ENCODE measurements at regions of chr7 and their contacts with region 1.

Region 1: DNA sequence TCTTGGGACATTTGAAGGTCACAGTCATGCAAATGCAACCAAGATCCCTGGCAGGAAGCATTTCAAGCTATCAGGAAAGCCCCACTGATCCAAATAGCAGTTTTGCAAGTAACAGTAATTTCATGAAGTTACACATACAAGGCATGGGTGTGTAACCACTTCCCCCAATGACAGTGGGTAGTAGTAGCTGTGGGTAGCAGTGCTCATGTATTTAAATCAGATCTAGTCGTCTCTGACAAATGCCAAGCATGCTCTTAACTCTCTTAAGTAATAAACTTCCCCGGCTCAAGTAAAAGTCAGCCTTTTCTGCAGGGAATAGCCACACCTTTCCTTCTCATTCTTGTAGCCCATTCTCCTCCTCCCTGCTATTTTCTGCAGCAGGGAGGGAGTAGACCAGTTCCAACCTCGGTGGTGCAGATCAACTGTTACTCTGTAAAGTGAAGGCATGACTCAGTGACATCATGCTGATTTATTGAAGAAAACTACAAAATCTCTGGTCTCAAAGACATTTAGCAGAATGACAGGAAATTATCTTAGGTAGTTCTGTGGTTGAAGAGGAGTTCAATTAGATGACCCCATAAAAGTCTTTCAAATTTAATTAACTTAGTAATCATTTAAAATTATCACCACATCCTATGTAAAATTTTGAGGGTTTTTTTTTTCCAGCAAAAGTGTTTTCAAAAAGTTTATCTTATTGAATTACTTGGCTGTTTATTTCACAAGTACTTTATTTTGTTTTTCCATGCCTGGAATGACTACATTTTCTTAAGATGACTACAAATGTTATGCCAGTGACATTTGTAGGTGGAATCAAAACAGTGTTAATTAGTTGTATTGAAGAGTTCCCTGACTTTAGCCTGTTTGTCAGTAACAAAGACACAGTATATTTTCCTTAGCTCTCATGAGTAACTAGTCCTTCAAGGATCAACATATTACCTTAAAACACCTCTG is 568.3 kb downstream of the INHBA start:
- DNase-seq: peak; percentile 64
- ATAC-seq: peak; percentile 92
- H3K4me3 ChIP-seq: no peak overlapping the region
- H3K27ac ChIP-seq: peak overlapping the region; percentile 56; the same call in 1 of the 2 replicates
- H3K4me1 ChIP-seq: no peaks in the 10 kb centered on the region
- H3K27me3 ChIP-seq: no peaks in the 10 kb centered on the region
- CTCF ChIP-seq: no peak
- EP300 ChIP-seq: peak; percentile 49 to 63; a peak in 1 of 4 replicates
- POLR2A ChIP-seq: no peak
- RAD21 ChIP-seq: no peak

Region 2: DNA sequence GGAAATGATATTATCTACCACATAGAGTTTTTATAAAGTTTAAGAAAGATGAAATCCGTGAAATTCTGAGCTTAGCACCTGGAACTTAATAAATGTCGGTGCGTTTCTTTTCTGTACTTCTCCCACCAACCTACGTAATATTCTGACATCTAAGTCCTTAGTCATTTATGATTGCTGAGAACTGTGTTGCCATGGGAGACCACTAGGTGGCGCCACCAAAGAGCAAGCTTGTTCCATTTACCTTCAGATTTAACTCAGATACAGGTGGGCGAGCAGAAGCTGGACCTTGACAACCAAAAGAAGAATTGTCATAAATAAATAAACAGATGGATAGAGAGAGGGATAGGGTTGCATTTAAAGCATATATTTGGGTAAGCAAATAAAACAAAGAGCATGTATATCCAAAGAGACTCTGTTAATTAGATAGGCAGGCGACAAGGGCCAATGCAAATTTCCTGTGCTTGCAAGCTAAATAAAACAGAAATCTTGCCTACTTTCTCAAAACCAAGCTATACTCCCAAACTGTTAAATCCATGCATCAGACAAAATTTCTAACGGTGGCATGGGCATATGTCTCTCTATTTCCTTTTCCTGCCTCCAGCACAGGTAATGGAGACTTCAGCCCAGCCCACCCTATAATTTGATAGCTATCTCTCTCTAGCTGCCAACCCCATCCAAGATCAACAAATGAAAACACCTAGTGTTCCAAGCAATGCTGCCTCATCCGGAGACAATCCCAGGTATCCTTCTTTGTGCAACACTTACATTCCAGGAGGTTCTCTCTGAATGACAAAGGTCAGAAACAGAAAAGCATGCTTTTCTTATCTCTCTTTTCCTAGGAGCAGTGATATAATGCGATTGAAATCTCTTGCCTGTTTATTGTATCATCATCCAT is 131.3 kb before region 1 on chr7:
- CTCF ChIA-PET with region 1: no interaction called
- POLR2A ChIA-PET with region 1: no interaction called
- RAD21 ChIA-PET with region 1: interaction called, 4 read pairs
- SMC1A ChIA-PET with region 1: interaction called, 10 read pairs
- in situ Hi-C with region 1: no loop called
- intact Hi-C with region 1: no loop called
- DNase-seq: peak; percentile 3
- ATAC-seq: peak; percentile 67
- H3K4me3 ChIP-seq: no peak overlapping the region
- H3K27ac ChIP-seq: no peak overlapping the region
- H3K4me1 ChIP-seq: no peaks in the 10 kb centered on the region
- H3K27me3 ChIP-seq: no peaks in the 10 kb centered on the region; a peak in 1 of 4 replicates
- CTCF ChIP-seq: peak; percentile 69 to 76 (median 71); a peak in 5 of 6 replicates
- EP300 ChIP-seq: no peak
- POLR2A ChIP-seq: no peak
- RAD21 ChIP-seq: peak; percentile 79

Region 3: GRCh38 chr7:41045556-41046123 is 88.9 kb before region 1 on chr7:
- CTCF ChIA-PET with region 1: no interaction called
- POLR2A ChIA-PET with region 1: no interaction called
- RAD21 ChIA-PET with region 1: interaction called, 4 read pairs
- SMC1A ChIA-PET with region 1: interaction called, 11 read pairs
- in situ Hi-C with region 1: no loop called
- intact Hi-C with region 1: no loop called
- DNase-seq: no peak
- ATAC-seq: peak; percentile 77
- H3K4me3 ChIP-seq: no peak overlapping the region
- H3K27ac ChIP-seq: no peak overlapping the region
- H3K4me1 ChIP-seq: no peaks in the 10 kb centered on the region
- H3K27me3 ChIP-seq: no peaks in the 10 kb centered on the region
- CTCF ChIP-seq: peak in 2 of 3 experiments; percentile 11 to 53; a peak in 3 of 6 replicates
- EP300 ChIP-seq: no peak
- POLR2A ChIP-seq: no peak
- RAD21 ChIP-seq: peak; percentile 73

Region 4: GRCh38 chr7:41107668-41108448 is 26.7 kb before region 1 on chr7:
- CTCF ChIA-PET with region 1: interaction called, 3 read pairs
- POLR2A ChIA-PET with region 1: interaction called, 10 read pairs
- RAD21 ChIA-PET with region 1: interaction called, 5 read pairs
- SMC1A ChIA-PET with region 1: interaction called, 19 read pairs
- in situ Hi-C with region 1: no loop called
- intact Hi-C with region 1: loop called (anchors 1 kb)
- DNase-seq: peak; percentile 4
- ATAC-seq: peak; percentile 71
- H3K4me3 ChIP-seq: no peak overlapping the region
- H3K27ac ChIP-seq: no peak overlapping the region
- H3K4me1 ChIP-seq: no peaks in the 10 kb centered on the region
- H3K27me3 ChIP-seq: no peaks in the 10 kb centered on the region
- CTCF ChIP-seq: no peak
- EP300 ChIP-seq: peak in 1 of 2 experiments; percentile 21; a peak in 1 of 4 replicates
- POLR2A ChIP-seq: no peak
- RAD21 ChIP-seq: no peak

Region 5: DNA sequence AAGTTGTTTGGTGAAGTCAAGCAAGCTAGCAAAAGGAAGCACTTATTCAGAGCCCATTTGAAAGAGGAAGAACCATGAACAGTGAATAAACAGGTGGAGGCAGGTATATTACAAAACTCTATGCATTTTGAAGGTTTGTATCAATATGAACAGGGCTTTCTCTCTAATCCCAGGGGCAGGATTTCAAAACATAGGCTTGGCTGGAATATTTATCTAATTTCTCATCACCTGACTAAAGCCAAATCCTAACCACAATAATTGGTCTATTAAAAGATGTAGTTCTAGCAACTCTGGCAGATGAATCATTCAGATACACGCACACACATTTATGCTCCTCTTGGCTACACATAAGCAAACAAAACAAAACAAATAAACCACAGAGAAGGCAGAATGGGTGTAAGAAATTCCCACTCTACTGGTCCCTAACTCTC is 14.0 kb after region 1 on chr7:
- CTCF ChIA-PET with region 1: interaction called, 4 read pairs
- POLR2A ChIA-PET with region 1: interaction called, 5 read pairs
- RAD21 ChIA-PET with region 1: interaction called, 3 read pairs
- SMC1A ChIA-PET with region 1: interaction called, 17 read pairs
- in situ Hi-C with region 1: no loop called
- intact Hi-C with region 1: no loop called
- DNase-seq: no peak
- ATAC-seq: peak; percentile 58
- H3K4me3 ChIP-seq: no peak overlapping the region
- H3K27ac ChIP-seq: no peak overlapping the region
- H3K4me1 ChIP-seq: no peaks in the 10 kb centered on the region
- H3K27me3 ChIP-seq: no peaks in the 10 kb centered on the region
- CTCF ChIP-seq: no peak
- EP300 ChIP-seq: no peak
- POLR2A ChIP-seq: no peak
- RAD21 ChIP-seq: no peak

Region 6: GRCh38 chr7:41247143-41247865 is 112.7 kb after region 1 on chr7:
- CTCF ChIA-PET with region 1: no interaction called
- POLR2A ChIA-PET with region 1: no interaction called
- RAD21 ChIA-PET with region 1: no interaction called
- SMC1A ChIA-PET with region 1: no interaction called
- in situ Hi-C with region 1: no loop called
- intact Hi-C with region 1: no loop called
- DNase-seq: no peak
- ATAC-seq: peak; percentile 50
- H3K4me3 ChIP-seq: no peak overlapping the region
- H3K27ac ChIP-seq: no peak overlapping the region
- H3K4me1 ChIP-seq: no peaks in the 10 kb centered on the region
- H3K27me3 ChIP-seq: no peaks in the 10 kb centered on the region
- CTCF ChIP-seq: no peak
- EP300 ChIP-seq: no peak
- POLR2A ChIP-seq: no peak
- RAD21 ChIP-seq: no peak

Measured in GM12878 (cell line).